Esophagus muscularis mucosa (tissue), 4 donors: ENCODE measurements at regions of chr7 and their contacts with region 1.

Region 1: GRCh38 chr7:91089382-91089963 is 174.8 kb upstream of the FZD1 start:
- DNase-seq: no peak
- H3K4me3 ChIP-seq: peak overlapping the region; percentile 26 to 43 (median 34)
- H3K27ac ChIP-seq: no peak overlapping the region
- H3K4me1 ChIP-seq: peaks cover 0 to 12% (median 4%) of the 10 kb centered on the region in 4 donors
- H3K27me3 ChIP-seq: no peaks in the 10 kb centered on the region
- CTCF ChIP-seq: peak; percentile 51 to 81 (median 62)
- EP300 ChIP-seq: no peak
- POLR2A ChIP-seq: no peak

Region 2: DNA sequence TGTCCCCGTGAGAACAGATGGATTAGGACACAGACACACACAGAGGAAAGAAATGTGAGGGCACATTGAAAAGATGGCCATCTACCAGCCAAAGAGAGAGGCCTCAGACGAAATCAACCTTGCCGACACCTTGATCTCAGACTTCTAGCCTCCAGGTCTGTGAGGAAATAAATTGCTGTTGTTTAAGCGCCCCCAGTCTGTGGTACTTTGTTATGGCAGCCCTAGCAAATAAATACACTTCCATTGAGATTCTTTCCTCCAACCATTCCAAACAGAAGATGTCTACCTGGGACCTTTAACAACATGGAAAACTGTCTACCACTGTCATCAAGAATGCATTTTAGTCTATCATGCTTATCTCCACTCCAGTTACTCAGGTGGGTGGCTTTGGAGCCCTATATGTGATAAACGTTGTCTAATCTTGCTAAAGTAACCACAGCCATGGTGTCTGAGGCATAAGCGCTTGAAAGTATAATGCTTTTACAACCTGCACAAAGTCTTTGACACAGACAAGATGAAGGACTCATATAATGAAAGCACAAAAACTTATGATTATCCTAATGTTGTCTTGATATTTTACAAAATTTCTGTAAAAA is 546.8 kb after region 1 on chr7:
- intact Hi-C with region 1: loop called (anchors 10 kb)
- DNase-seq: peak; percentile 74
- H3K4me3 ChIP-seq: no peak overlapping the region
- H3K27ac ChIP-seq: no peak overlapping the region
- H3K4me1 ChIP-seq: no peaks in the 10 kb centered on the region
- H3K27me3 ChIP-seq: no peaks in the 10 kb centered on the region
- CTCF ChIP-seq: peak; percentile 37 to 60 (median 54)
- EP300 ChIP-seq: no peak
- POLR2A ChIP-seq: no peak

Region 3: GRCh38 chr7:91784463-91784862 is 695.0 kb after region 1 on chr7:
- intact Hi-C with region 1: loop called (anchors 5 kb)
- DNase-seq: no peak
- H3K4me3 ChIP-seq: no peak overlapping the region
- H3K27ac ChIP-seq: no peak overlapping the region
- H3K4me1 ChIP-seq: no peaks in the 10 kb centered on the region
- H3K27me3 ChIP-seq: no peaks in the 10 kb centered on the region
- CTCF ChIP-seq: peak in 2 of 3 experiments; percentile 26 to 28
- EP300 ChIP-seq: no peak
- POLR2A ChIP-seq: no peak